ENCODE measurements at regions of chrX and their contacts with region 1.

Region 1: GRCh38 chrX:57821703-57822375 is 88.4 kb downstream of the ZXDA start:
- DNase-seq: peak; percentile 43
- H3K4me3 Mint-ChIP-seq: no peak overlapping the region
- H3K27ac Mint-ChIP-seq: no peak overlapping the region
- H3K4me1 Mint-ChIP-seq: no peaks in the 10 kb centered on the region
- H3K27me3 Mint-ChIP-seq: no peaks in the 10 kb centered on the region

Region 2: DNA sequence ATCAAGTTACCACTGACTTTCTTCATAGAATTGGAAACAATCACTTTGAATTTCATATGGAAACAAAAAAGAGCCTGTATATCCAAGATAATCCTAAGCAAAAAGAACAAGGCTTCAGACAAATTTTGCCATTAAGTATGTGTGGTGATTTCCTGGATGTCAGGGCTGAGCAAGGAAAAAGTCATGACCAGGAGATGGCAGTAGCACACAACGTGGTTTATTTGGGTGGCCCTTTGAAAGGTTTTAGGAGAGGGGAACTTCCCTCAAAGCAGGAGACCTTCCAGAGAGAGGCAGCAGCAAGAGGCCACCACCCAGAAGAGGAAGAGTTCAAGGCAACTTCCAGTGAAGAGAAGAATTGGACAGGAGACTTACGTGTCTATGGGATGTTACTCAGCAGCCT is 248.1 kb before region 1 on chrX:
- CTCF ChIA-PET with region 1: interaction called, 3 read pairs
- intact Hi-C with region 1: loop called (anchors 5 kb)
- DNase-seq: peak; percentile 39
- H3K4me3 Mint-ChIP-seq: no peak overlapping the region
- H3K27ac Mint-ChIP-seq: no peak overlapping the region
- H3K4me1 Mint-ChIP-seq: no peaks in the 10 kb centered on the region
- H3K27me3 Mint-ChIP-seq: no peaks in the 10 kb centered on the region

Region 3: DNA sequence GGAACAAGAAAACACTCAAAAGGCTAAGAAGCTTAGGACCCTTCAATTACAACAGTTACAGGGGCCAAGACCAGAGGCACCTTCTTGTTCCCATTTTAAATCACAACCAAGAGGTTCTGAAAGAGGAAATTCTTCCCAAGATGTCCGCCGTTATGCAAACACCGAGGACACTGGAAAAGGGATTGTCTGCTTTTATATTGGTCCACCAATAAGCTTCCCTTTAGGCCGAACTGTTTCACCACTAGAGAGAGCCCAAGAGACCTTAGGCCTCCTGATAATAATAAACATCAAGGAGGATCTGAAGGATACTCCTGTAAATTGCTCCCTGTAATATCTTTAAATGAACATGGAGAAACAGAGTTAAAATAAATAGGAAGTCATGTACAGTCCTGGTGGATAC is 49.2 kb before region 1 on chrX:
- CTCF ChIA-PET with region 1: no interaction called
- intact Hi-C with region 1: no loop called
- DNase-seq: no peak
- H3K4me3 Mint-ChIP-seq: no peak overlapping the region
- H3K27ac Mint-ChIP-seq: no peak overlapping the region
- H3K4me1 Mint-ChIP-seq: no peaks in the 10 kb centered on the region
- H3K27me3 Mint-ChIP-seq: no peaks in the 10 kb centered on the region

Region 4: DNA sequence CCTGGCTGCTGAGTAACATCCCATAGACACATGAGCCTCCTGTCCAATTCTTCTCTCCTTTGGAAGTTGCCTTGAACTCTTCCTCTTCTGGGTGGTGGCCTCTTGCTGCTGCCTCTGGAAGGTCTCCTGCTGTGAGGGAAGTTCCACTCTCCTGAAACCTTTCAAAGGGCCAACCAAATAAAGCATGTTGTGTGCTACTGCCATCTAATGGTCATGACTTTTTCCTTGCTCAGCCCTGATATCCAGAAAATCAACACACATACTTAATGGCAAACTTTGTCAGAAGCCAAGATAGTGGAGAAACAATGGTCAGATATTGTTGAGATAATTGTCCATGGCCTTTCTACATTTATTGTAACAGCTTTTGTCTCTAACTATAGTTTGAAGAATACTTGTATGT is 107.5 kb after region 1 on chrX:
- CTCF ChIA-PET with region 1: interaction called, 4 read pairs
- intact Hi-C with region 1: loop called (anchors 1 kb)
- DNase-seq: no peak
- H3K4me3 Mint-ChIP-seq: no peak overlapping the region
- H3K27ac Mint-ChIP-seq: no peak overlapping the region
- H3K4me1 Mint-ChIP-seq: no peaks in the 10 kb centered on the region
- H3K27me3 Mint-ChIP-seq: no peaks in the 10 kb centered on the region

Region 5: DNA sequence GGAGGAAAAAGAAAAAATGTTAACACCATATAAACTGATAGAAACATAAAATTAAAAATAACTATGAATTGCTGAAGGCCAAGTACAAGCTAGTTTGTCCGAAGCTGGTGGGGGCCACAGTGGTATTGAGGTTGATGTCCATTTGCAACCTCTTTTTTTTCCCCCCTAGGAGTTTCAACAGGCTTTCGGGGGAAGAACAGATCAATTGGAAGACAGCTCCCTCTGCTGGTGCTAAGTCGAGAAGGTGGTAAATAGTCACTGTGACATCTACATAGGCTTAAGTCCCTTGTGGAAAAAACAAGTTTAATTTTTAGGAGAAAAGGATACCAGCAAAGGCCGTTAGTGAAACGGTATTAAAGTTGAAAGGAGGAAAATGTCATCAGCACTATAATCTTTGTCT is 204.1 kb after region 1 on chrX:
- CTCF ChIA-PET with region 1: interaction called, 5 read pairs
- intact Hi-C with region 1: loop called (anchors 1 kb)
- DNase-seq: peak; percentile 47
- H3K4me3 Mint-ChIP-seq: no peak overlapping the region
- H3K27ac Mint-ChIP-seq: no peak overlapping the region
- H3K4me1 Mint-ChIP-seq: peaks cover 20% of the 10 kb centered on the region
- H3K27me3 Mint-ChIP-seq: no peaks in the 10 kb centered on the region

Region 6: DNA sequence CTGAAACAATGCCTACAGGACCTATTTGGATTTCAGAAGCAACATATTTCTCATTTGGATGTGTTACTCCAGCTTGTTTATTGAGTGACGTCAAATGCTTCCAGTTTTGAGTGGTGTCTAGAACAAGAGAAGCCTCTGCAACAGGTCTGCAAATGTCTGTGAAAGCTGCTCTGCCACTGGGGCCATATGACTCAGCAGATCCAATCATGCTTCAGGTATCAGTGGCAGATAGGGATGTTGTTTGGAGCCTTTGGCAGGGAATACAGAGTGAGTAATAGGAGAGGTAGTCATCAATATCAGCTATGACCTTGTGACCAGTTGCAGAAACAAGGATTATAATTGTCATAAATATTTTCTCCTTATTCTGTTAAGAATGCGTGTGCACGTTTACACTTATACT is 229.5 kb after region 1 on chrX:
- CTCF ChIA-PET with region 1: no interaction called
- intact Hi-C with region 1: no loop called
- DNase-seq: no peak
- H3K4me3 Mint-ChIP-seq: no peak overlapping the region
- H3K27ac Mint-ChIP-seq: no peak overlapping the region
- H3K4me1 Mint-ChIP-seq: no peaks in the 10 kb centered on the region
- H3K27me3 Mint-ChIP-seq: no peaks in the 10 kb centered on the region

Measured in activated naive CD4-positive, alpha-beta T cell treated with anti-CD3 and anti-CD28 coated beads for 36 hours (primary cell).